ENCODE measurements at regions of chr18 and their contacts with region 1.

Region 1: DNA sequence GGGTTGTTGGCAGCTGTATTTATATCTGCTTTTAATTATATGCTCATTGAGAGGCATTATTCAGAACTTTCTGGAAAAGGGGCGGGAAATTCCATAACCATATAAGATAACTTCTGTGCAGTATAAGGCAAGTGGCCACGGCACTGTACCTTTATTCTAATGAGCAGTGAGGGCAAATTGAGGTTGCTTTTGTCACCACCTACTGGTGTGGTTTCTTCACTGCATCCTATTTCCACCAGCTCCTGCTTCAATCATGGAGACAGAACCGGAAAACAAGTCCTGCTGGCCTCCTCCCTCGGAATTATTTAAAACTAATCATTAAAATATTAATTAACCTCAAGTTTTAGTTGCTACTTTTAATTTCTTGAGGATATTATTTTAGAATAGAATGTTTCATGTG is 759.4 kb downstream of the CBLN2 start:
- DNase-seq: no peak
- ATAC-seq: no peak
- H3K4me3 ChIP-seq: no peak overlapping the region
- H3K27ac ChIP-seq: no peak overlapping the region
- H3K4me1 ChIP-seq: no peaks in the 10 kb centered on the region
- H3K27me3 ChIP-seq: no peaks in the 10 kb centered on the region

Region 2: DNA sequence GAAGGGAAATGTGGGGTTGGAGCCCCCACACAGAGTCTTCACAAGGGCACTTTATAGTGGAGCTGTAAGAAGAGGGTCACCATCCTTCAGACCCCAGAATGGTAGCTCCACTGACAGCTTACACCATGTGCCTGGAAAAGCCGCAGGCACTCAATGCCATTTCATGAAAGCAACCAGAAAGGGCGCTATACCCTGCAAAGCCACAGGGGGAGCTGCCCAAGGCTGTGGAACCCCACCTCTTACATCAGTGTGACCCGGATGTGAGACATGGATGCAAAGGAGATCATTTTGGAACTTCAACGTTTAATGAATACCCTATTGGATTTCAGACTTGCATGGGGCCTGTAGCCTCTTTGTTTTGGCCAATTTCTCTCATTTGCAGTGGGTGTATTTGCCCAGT is 64.6 kb after region 1 on chr18:
- intact Hi-C with region 1: loop called in 1 of 2 experiments (anchors 10 kb)
- DNase-seq: no peak
- ATAC-seq: no peak
- H3K4me3 ChIP-seq: no peak overlapping the region
- H3K27ac ChIP-seq: no peak overlapping the region
- H3K4me1 ChIP-seq: no peaks in the 10 kb centered on the region
- H3K27me3 ChIP-seq: no peaks in the 10 kb centered on the region